H1 (cell line): ENCODE measurements at regions of chr1 and their contacts with region 1.

Region 1: GRCh38 chr1:206725109-206725963 is 40.6 kb downstream of the MAPKAPK2 start:
- DNase-seq: peak in 1 of 2 experiments; percentile 77
- H3K4me3 ChIP-seq: no peak overlapping the region
- H3K27ac ChIP-seq: no peak overlapping the region
- H3K4me1 ChIP-seq: peaks cover 6 to 13% (median 8%) of the 10 kb centered on the region in 4 experiments
- H3K27me3 ChIP-seq: no peaks in the 10 kb centered on the region
- CTCF ChIP-seq: peak; percentile 64 to 85 (median 77)
- EP300 ChIP-seq: no peak
- POLR2A ChIP-seq: no peak
- RAD21 ChIP-seq: peak; percentile 22 to 46; a peak in 3 of 4 replicates

Region 2: DNA sequence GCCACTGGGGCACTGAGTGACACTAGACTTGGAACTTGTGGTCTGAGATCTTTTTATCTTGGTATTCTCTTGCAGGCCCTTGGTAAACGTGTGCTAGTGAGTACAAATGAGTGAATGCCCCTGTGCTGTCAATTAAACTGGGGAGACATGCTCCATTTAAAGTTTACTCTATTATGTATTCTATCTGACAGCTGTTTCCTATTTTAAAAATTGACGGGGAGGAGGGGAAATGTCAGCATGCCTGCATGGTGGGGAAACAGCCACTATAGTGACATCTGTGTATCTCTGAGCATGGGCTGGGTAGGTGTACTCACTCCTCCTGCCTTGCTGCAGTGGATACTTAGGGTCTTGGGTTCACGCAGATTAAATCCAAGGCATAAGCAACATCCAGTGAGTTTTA is 314.0 kb before region 1 on chr1:
- CTCF ChIA-PET with region 1: no interaction called
- POLR2A ChIA-PET with region 1: no interaction called
- DNase-seq: no peak
- H3K4me3 ChIP-seq: no peak overlapping the region
- H3K27ac ChIP-seq: no peak overlapping the region
- H3K4me1 ChIP-seq: no peaks in the 10 kb centered on the region
- H3K27me3 ChIP-seq: peaks cover 0 to 1% (median 0%) of the 10 kb centered on the region in 4 experiments; a peak in 1 of 7 replicates
- CTCF ChIP-seq: no peak
- EP300 ChIP-seq: no peak
- POLR2A ChIP-seq: no peak
- RAD21 ChIP-seq: no peak

Region 3: DNA sequence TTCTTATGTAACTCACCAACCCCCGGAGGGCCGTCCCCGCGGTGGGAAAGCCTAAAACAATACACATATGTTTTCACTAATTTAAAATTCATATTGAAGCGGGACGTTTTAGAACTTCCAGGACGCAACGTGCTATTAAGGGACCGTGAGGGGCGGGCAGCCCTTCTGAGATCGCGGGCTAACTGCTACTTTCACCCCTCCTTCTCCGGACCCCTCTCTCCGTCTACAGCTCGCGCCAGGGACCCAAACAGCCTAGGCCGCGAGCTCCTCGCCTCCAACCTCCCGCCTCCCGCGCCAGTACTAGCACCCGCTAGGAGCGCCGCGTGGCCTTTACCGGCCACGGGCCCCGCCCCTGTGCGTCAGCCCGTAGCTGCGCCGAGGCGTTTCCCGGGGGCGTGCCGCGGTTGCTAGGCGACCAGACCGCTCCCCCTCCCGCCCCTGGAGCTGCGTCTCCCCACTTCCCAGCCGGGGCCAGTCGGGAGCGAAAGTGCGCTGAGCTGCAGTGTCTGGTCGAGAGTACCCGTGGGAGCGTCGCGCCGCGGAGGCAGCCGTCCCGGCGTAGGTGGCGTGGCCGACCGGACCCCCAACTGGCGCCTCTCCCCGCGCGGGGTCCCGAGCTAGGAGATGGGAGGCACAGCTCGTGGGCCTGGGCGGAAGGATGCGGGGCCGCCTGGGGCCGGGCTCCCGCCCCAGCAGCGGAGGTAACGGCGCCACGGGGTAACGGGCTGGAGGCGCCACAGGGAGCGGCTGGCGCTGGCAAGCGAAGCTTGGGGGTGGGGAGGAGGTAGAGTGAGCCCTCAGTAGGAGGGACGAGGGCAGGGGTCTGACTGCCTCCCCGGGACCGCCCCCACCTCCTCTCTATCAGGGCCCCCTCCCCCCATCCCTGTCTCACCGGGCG is 90.0 kb before region 1 on chr1 and contains the start of gene DYRK3:
- CTCF ChIA-PET with region 1: interaction called, 16 read pairs
- POLR2A ChIA-PET with region 1: no interaction called
- DNase-seq: peak; percentile 63 to 97
- H3K4me3 ChIP-seq: peak within 1 kb of the TSS; percentile 66 to 88 (median 79)
- H3K27ac ChIP-seq: no peak within 1 kb of the TSS
- H3K4me1 ChIP-seq: peaks cover 0 to 10% (median 4%) of the 10 kb centered on the region in 4 experiments; a peak in 4 of 7 replicates
- H3K27me3 ChIP-seq: peaks cover 0 to 4% (median 0%) of the 10 kb centered on the region in 4 experiments; a peak in 2 of 7 replicates
- CTCF ChIP-seq: no peak
- EP300 ChIP-seq: no peak
- POLR2A ChIP-seq: peak in 1 of 2 experiments; percentile 68; a peak in 1 of 3 replicates
- RAD21 ChIP-seq: no peak
- total RNA-seq, gene DYRK3: 7.7 and 8.5 TPM in 2 replicates

Region 4: DNA sequence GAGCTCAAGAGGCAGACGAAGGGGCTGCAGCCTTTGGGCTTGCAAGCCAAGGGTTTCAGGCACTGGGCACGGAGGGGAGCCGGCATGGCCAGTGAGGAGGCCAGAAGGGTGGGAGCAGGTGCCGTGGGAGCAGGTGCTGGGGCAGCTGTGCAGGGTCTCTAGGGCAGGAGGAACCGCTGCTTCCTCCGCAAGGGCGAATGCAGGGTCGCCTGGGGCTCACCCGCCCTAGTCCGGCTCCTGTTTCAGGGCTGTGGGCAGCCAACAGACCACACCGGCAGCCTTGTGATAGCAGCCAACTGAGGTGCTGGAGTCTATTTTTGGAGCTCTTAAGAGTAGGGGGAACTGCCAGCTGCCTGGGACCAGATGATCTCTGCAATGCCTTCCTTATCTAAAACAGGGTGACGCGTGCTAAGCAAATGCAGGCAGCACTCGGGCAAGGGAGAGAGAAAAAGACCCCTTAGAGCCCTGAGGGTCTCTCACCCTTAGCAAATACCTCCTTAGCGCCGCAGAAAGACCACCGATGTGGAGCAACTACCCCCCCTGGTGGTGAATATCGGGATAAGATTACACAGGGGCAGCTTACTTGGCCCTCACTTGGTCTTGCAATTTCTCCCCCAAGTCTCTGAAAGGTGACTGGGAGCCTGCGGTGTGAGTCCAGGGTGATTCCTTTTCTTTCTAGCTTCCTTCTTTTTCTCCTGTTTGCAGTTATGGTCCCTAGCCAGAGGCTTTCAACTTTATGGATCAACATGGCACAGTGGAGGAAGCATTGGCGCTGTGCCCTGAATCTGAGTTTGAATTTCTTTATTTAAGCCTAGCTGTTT is 61.3 kb before region 1 on chr1:
- CTCF ChIA-PET with region 1: interaction called, 34 read pairs
- POLR2A ChIA-PET with region 1: interaction called, 3 read pairs
- DNase-seq: peak in 1 of 2 experiments; percentile 92
- H3K4me3 ChIP-seq: peak overlapping the region; percentile 11 to 54 (median 25); a peak in 7 of 8 replicates
- H3K27ac ChIP-seq: no peak overlapping the region
- H3K4me1 ChIP-seq: peaks cover 0 to 5% (median 1%) of the 10 kb centered on the region in 4 experiments; a peak in 4 of 7 replicates
- H3K27me3 ChIP-seq: peaks cover 0 to 10% (median 3%) of the 10 kb centered on the region in 4 experiments; a peak in 5 of 7 replicates
- CTCF ChIP-seq: peak; percentile 72 to 91 (median 87)
- EP300 ChIP-seq: no peak
- POLR2A ChIP-seq: no peak
- RAD21 ChIP-seq: peak; percentile 88 to 94

Region 5: DNA sequence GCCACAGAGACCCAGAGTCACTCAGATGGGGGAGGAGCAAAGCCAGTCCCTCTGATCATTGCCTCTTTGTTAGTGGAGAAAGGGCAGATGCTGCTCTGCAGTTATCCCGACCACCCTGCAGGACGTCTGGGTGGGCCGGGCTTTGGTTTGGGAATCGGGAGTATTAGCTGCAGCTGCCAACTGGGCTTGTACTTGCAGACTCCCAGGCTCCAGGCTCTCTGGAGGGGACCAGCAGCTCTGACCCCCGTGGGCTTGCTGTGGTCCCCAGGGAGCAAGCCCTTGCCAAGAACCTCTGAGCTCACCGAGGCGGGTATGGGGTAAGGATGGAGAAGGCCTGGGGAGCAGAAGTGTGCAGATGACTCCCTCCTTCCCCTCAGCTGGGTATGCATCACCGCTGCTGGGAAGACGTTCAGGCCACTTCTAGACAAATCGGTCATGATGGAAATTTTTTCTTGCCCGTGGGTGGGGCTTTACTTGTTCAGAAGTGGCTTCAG is 19.0 kb before region 1 on chr1:
- CTCF ChIA-PET with region 1: interaction called, 77 read pairs
- POLR2A ChIA-PET with region 1: interaction called, 3 read pairs
- DNase-seq: no peak
- H3K4me3 ChIP-seq: no peak overlapping the region
- H3K27ac ChIP-seq: no peak overlapping the region
- H3K4me1 ChIP-seq: peaks cover 22 to 49% (median 32%) of the 10 kb centered on the region in 4 experiments
- H3K27me3 ChIP-seq: no peaks in the 10 kb centered on the region
- CTCF ChIP-seq: no peak
- EP300 ChIP-seq: no peak
- POLR2A ChIP-seq: no peak
- RAD21 ChIP-seq: no peak

Region 6: GRCh38 chr1:206744683-206745082 is 19.3 kb after region 1 on chr1:
- CTCF ChIA-PET with region 1: interaction called, 18 read pairs
- POLR2A ChIA-PET with region 1: no interaction called
- DNase-seq: no peak
- H3K4me3 ChIP-seq: no peak overlapping the region
- H3K27ac ChIP-seq: no peak overlapping the region
- H3K4me1 ChIP-seq: no peaks in the 10 kb centered on the region
- H3K27me3 ChIP-seq: no peaks in the 10 kb centered on the region; a peak in 1 of 7 replicates
- CTCF ChIP-seq: no peak
- EP300 ChIP-seq: no peak
- POLR2A ChIP-seq: no peak
- RAD21 ChIP-seq: no peak

Region 7: GRCh38 chr1:206808615-206809014 is 83.3 kb after region 1 on chr1:
- CTCF ChIA-PET with region 1: interaction called, 36 read pairs
- POLR2A ChIA-PET with region 1: no interaction called
- DNase-seq: no peak
- H3K4me3 ChIP-seq: no peak overlapping the region
- H3K27ac ChIP-seq: no peak overlapping the region
- H3K4me1 ChIP-seq: no peaks in the 10 kb centered on the region
- H3K27me3 ChIP-seq: no peaks in the 10 kb centered on the region
- CTCF ChIP-seq: peak; percentile 6 to 53 (median 44)
- EP300 ChIP-seq: no peak
- POLR2A ChIP-seq: no peak
- RAD21 ChIP-seq: peak; percentile 62 to 73

Region 8: GRCh38 chr1:206982216-206982615 is 256.9 kb after region 1 on chr1:
- CTCF ChIA-PET with region 1: interaction called, 20 read pairs
- POLR2A ChIA-PET with region 1: no interaction called
- DNase-seq: peak in 1 of 2 experiments; percentile 65
- H3K4me3 ChIP-seq: no peak overlapping the region
- H3K27ac ChIP-seq: no peak overlapping the region
- H3K4me1 ChIP-seq: peaks cover 4 to 15% (median 8%) of the 10 kb centered on the region in 4 experiments
- H3K27me3 ChIP-seq: no peaks in the 10 kb centered on the region; a peak in 1 of 7 replicates
- CTCF ChIP-seq: peak; percentile 49 to 86 (median 76)
- EP300 ChIP-seq: no peak
- POLR2A ChIP-seq: no peak
- RAD21 ChIP-seq: peak; percentile 88 to 92